ENCODE measurements at regions of chrX and their contacts with region 1.

Region 1: GRCh38 chrX:151151665-151152267 is 24.6 kb upstream of the GPR50 start:
- DNase-seq: no peak
- H3K4me3 ChIP-seq: no peak overlapping the region
- H3K27ac ChIP-seq: no peak overlapping the region
- H3K4me1 ChIP-seq: no peaks in the 10 kb centered on the region
- H3K27me3 ChIP-seq: peaks cover 0 to 7% (median 0%) of the 10 kb centered on the region in 4 donors
- CTCF ChIP-seq: peak; percentile 52 to 69 (median 69)
- EP300 ChIP-seq: no peak
- POLR2A ChIP-seq: no peak

Region 2: GRCh38 chrX:150752124-150752523 is 399.6 kb before region 1 on chrX:
- intact Hi-C with region 1: no loop called
- DNase-seq: no peak
- H3K4me3 ChIP-seq: no peak overlapping the region
- H3K27ac ChIP-seq: no peak overlapping the region
- H3K4me1 ChIP-seq: no peaks in the 10 kb centered on the region
- H3K27me3 ChIP-seq: no peaks in the 10 kb centered on the region
- CTCF ChIP-seq: no peak
- EP300 ChIP-seq: no peak
- POLR2A ChIP-seq: no peak

Region 3: DNA sequence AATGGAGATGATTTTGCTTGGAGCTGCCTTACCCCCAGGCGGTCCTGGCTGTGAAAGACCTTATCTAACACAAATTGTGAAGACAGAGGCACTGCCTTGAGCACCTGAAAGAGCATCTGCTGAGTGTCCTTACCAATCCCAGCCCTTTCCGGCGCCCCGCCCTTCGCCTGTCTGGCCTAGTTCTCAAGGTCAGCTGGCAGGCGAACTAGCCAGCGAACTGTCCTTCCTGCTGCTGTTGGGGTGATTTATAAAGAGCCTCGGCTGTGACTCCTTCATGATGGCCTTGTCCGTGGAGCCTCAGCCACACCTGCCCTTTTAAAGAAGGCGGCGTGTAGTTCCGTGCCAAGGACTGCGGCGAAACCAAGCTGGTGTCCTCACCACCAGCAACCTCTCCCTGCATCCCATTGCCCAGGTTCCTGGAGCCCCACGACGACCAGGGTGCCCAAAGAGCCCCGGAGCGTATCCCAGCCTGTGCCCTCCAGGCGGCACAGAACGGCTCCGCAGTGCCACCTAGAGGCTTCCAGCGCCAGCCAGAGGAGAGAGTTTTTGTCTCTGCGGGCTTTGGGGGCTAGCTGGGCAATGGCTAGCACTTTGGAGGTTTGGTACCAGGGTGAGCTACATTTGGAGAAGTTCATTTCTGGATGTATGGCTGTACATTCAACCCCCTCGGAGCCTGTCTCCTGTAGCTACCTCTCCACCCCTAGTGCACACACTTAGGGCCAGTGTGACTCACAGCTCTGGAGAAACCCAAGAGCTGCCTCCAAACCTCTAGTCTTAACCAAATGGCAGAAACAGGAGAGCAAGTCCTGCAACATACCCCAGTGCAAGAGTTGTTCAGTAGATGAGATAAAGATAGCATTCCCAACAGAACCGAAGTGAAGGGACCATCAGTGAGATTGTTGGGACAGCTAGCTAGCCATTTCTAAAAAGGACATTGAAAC is 208.4 kb after region 1 on chrX:
- intact Hi-C with region 1: loop called (anchors 5 kb)
- DNase-seq: no peak
- H3K4me3 ChIP-seq: peak overlapping the region in 2 of 4 donors; percentile 22 to 35
- H3K27ac ChIP-seq: no peak overlapping the region
- H3K4me1 ChIP-seq: peaks cover 0 to 8% (median 2%) of the 10 kb centered on the region in 4 donors
- H3K27me3 ChIP-seq: peaks cover 0 to 2% (median 0%) of the 10 kb centered on the region in 4 donors
- CTCF ChIP-seq: peak; percentile 25 to 57 (median 41)
- EP300 ChIP-seq: no peak
- POLR2A ChIP-seq: no peak

Region 4: GRCh38 chrX:151680805-151681204 is 529.0 kb after region 1 on chrX:
- intact Hi-C with region 1: loop called (anchors 5 kb)
- DNase-seq: peak; percentile 79
- H3K4me3 ChIP-seq: no peak overlapping the region
- H3K27ac ChIP-seq: no peak overlapping the region
- H3K4me1 ChIP-seq: no peaks in the 10 kb centered on the region
- H3K27me3 ChIP-seq: no peaks in the 10 kb centered on the region
- CTCF ChIP-seq: peak; percentile 35 to 50 (median 37)
- EP300 ChIP-seq: no peak
- POLR2A ChIP-seq: no peak

Region 5: DNA sequence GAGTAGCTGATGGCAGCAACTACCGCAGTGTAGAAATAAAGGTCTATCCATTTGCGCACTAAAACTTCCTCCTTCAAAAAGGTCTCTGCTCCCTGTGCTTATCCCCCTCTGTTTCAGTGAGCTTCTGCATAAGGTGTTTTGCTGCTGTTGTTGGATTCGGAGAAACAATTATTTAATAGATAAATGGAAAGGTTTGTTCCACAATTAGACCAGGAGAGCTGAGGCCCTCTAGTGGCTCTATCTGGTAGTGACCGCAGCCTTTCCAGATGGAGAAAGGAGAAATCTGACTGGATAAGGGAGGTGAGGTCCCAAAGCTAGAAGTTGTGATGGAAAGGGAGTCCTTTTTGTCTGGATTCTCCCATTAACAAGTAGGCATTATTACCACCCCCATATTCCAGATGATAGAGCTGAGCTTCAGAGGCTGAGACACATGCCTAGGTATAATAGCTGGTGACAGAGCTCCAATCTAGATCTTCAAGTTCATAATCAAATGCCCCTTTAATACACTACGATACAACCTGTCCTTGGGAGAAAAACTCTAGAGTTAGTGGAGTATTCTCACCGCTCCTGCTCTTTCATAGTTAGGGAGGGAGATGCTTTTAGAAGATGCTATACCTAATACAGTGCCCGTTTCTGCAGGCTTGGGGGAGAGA is 1480.8 kb after region 1 on chrX:
- intact Hi-C with region 1: loop called (anchors 5 kb)
- DNase-seq: peak; percentile 87
- H3K4me3 ChIP-seq: no peak overlapping the region
- H3K27ac ChIP-seq: no peak overlapping the region
- H3K4me1 ChIP-seq: peaks cover 0 to 1% (median 0%) of the 10 kb centered on the region in 4 donors
- H3K27me3 ChIP-seq: peaks cover 0 to 6% (median 3%) of the 10 kb centered on the region in 4 donors
- CTCF ChIP-seq: peak; percentile 56 to 72 (median 57)
- EP300 ChIP-seq: no peak
- POLR2A ChIP-seq: no peak